ENCODE measurements at regions of chr7 and their contacts with region 1.

Region 1: GRCh38 chr7:135501403-135501802 is 8.5 kb downstream of the CNOT4 start:
- DNase-seq: no peak
- H3K4me3 ChIP-seq: no peak overlapping the region
- H3K27ac ChIP-seq: no peak overlapping the region
- H3K4me1 ChIP-seq: no peaks in the 10 kb centered on the region
- H3K27me3 ChIP-seq: no peaks in the 10 kb centered on the region
- CTCF ChIP-seq: no peak

Region 2: DNA sequence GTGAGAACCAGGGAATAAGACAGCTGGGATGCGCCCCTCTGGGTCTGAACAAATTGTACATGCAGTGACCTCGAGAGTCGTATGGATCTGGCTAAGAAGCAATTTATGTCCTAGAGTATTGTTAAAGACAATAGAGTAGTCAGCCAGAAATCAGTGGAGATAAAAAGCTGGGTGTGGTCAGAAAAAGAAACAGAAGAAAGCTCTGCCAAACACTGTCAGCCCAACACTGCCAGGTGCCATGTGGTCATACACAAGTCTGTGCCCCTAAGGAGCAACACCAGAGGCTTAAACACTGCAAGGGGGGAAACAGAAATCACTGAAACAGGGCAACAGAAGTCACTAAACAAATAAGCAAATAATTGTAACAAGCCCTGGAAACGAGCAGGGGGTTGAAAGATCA is 53.6 kb before region 1 on chr7:
- CTCF ChIA-PET with region 1: no interaction called
- POLR2A ChIA-PET with region 1: no interaction called
- intact Hi-C with region 1: no loop called
- DNase-seq: no peak
- H3K4me3 ChIP-seq: no peak overlapping the region
- H3K27ac ChIP-seq: no peak overlapping the region
- H3K4me1 ChIP-seq: no peaks in the 10 kb centered on the region
- H3K27me3 ChIP-seq: no peaks in the 10 kb centered on the region
- CTCF ChIP-seq: no peak

Region 3: DNA sequence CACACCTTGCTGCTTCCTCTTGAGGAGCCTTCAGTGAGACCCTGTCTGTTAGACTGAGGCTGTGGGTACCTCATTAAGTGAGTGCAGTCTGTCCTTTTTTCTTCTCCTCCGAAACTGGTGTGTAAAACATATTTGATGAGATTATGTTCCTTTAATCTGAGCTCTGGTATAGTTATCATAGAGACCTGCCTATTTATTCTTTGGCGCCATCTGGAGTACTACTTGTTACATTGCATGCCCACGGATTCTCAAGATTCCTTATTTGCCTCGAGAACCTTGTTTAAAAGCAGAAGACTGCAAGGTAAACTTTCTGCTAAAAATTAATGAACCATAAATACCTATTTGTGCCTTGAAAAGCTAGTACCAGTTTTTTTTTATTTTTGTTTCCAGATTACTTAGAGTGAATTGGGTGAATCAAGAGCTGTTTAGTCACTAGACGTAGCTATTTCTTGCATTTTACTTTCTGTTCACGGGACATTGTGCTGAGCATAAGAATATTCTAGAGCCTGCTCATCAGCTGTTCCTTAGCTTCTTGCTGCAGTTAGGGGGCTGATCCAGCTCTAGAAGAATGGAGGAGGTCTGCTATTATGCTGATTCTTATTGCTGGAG is 144.0 kb after region 1 on chr7:
- CTCF ChIA-PET with region 1: interaction called, 10 read pairs
- POLR2A ChIA-PET with region 1: no interaction called
- intact Hi-C with region 1: no loop called
- DNase-seq: no peak
- H3K4me3 ChIP-seq: no peak overlapping the region
- H3K27ac ChIP-seq: no peak overlapping the region
- H3K4me1 ChIP-seq: no peaks in the 10 kb centered on the region
- H3K27me3 ChIP-seq: no peaks in the 10 kb centered on the region
- CTCF ChIP-seq: peak; percentile 77

Region 4: GRCh38 chr7:135710417-135711138 is 209.2 kb after region 1 on chr7:
- CTCF ChIA-PET with region 1: no interaction called
- POLR2A ChIA-PET with region 1: no interaction called
- intact Hi-C with region 1: no loop called
- DNase-seq: no peak
- H3K4me3 ChIP-seq: no peak overlapping the region
- H3K27ac ChIP-seq: no peak overlapping the region
- H3K4me1 ChIP-seq: peaks cover 51% of the 10 kb centered on the region
- H3K27me3 ChIP-seq: no peaks in the 10 kb centered on the region
- CTCF ChIP-seq: peak; percentile 74

Region 5: DNA sequence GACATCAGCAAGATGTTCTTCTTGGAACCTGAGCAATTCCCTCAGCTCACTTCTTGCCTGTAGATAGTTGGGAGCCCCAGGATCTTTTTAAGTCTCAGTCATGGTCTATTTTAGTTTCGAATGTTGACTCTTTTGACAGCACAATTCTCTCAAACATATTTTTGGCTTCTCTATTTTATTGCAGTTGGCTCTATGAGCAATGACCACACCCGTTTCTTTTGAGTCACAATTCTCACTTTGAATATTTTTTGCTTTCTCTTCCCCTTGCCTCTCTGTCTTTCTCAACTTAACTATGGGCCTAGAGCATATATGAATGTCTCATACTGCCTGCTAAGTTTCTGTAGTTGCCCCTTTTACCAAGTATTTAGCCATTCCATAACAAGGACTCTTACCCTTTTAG is 1619.3 kb after region 1 on chr7:
- CTCF ChIA-PET with region 1: interaction called, 11 read pairs
- POLR2A ChIA-PET with region 1: no interaction called
- intact Hi-C with region 1: no loop called
- DNase-seq: no peak
- H3K4me3 ChIP-seq: no peak overlapping the region
- H3K27ac ChIP-seq: no peak overlapping the region
- H3K4me1 ChIP-seq: no peaks in the 10 kb centered on the region
- H3K27me3 ChIP-seq: no peaks in the 10 kb centered on the region
- CTCF ChIP-seq: no peak

Measured in PC-9 (cell line).